Caco-2 (cell line): ENCODE measurements at regions of chr1 and their contacts with region 1.

Region 1: GRCh38 chr1:41432481-41433280 is 51.8 kb downstream of the EDN2 start:
- DNase-seq: peak; percentile 72 to 84
- H3K4me3 ChIP-seq: no peak overlapping the region
- H3K4me3 Mint-ChIP-seq: no peak overlapping the region
- H3K27ac Mint-ChIP-seq: peak overlapping the region; percentile 40
- H3K4me1 ChIP-seq: peaks cover 24% of the 10 kb centered on the region
- H3K4me1 Mint-ChIP-seq: peaks cover 7% of the 10 kb centered on the region
- H3K27me3 ChIP-seq: no peaks in the 10 kb centered on the region
- H3K27me3 Mint-ChIP-seq: no peaks in the 10 kb centered on the region
- CTCF ChIP-seq: peak; percentile 76 to 85

Region 2: GRCh38 chr1:41268154-41268770 is 164.4 kb before region 1 on chr1:
- CTCF ChIA-PET with region 1: no interaction called
- POLR2A ChIA-PET with region 1: no interaction called
- intact Hi-C with region 1: loop called (anchors 1 kb)
- DNase-seq: peak; percentile 56 to 77
- H3K4me3 ChIP-seq: no peak overlapping the region
- H3K4me3 Mint-ChIP-seq: no peak overlapping the region
- H3K27ac Mint-ChIP-seq: no peak overlapping the region
- H3K4me1 ChIP-seq: no peaks in the 10 kb centered on the region
- H3K4me1 Mint-ChIP-seq: no peaks in the 10 kb centered on the region
- H3K27me3 ChIP-seq: no peaks in the 10 kb centered on the region
- H3K27me3 Mint-ChIP-seq: no peaks in the 10 kb centered on the region
- CTCF ChIP-seq: peak; percentile 85 to 86

Region 3: GRCh38 chr1:41282679-41283317 is 149.9 kb before region 1 on chr1:
- CTCF ChIA-PET with region 1: interaction called, 6 read pairs
- POLR2A ChIA-PET with region 1: no interaction called
- intact Hi-C with region 1: loop called (anchors 5 kb)
- DNase-seq: peak; percentile 41 to 53
- H3K4me3 ChIP-seq: no peak overlapping the region
- H3K4me3 Mint-ChIP-seq: no peak overlapping the region
- H3K27ac Mint-ChIP-seq: no peak overlapping the region
- H3K4me1 ChIP-seq: no peaks in the 10 kb centered on the region
- H3K4me1 Mint-ChIP-seq: no peaks in the 10 kb centered on the region
- H3K27me3 ChIP-seq: no peaks in the 10 kb centered on the region
- H3K27me3 Mint-ChIP-seq: peaks cover 15% of the 10 kb centered on the region
- CTCF ChIP-seq: peak; percentile 76 to 78

Region 4: GRCh38 chr1:41322835-41323627 is 109.7 kb before region 1 on chr1:
- CTCF ChIA-PET with region 1: interaction called, 3 read pairs
- POLR2A ChIA-PET with region 1: no interaction called
- intact Hi-C with region 1: loop called (anchors 1 kb)
- DNase-seq: peak in 1 of 2 experiments; percentile 40
- H3K4me3 ChIP-seq: no peak overlapping the region
- H3K4me3 Mint-ChIP-seq: no peak overlapping the region
- H3K27ac Mint-ChIP-seq: no peak overlapping the region
- H3K4me1 ChIP-seq: no peaks in the 10 kb centered on the region
- H3K4me1 Mint-ChIP-seq: peaks cover 8% of the 10 kb centered on the region
- H3K27me3 ChIP-seq: no peaks in the 10 kb centered on the region
- H3K27me3 Mint-ChIP-seq: no peaks in the 10 kb centered on the region
- CTCF ChIP-seq: peak; percentile 27 to 48

Region 5: GRCh38 chr1:41496080-41497055 is 63.7 kb after region 1 on chr1:
- CTCF ChIA-PET with region 1: no interaction called
- POLR2A ChIA-PET with region 1: no interaction called
- intact Hi-C with region 1: no loop called
- DNase-seq: peak; percentile 88 to 89
- H3K4me3 ChIP-seq: peak overlapping the region; percentile 35
- H3K4me3 Mint-ChIP-seq: peak overlapping the region; percentile 42
- H3K27ac Mint-ChIP-seq: peak overlapping the region; percentile 55
- H3K4me1 ChIP-seq: peaks cover 45% of the 10 kb centered on the region
- H3K4me1 Mint-ChIP-seq: no peaks in the 10 kb centered on the region
- H3K27me3 ChIP-seq: no peaks in the 10 kb centered on the region
- H3K27me3 Mint-ChIP-seq: no peaks in the 10 kb centered on the region
- CTCF ChIP-seq: no peak

Region 6: GRCh38 chr1:41573785-41574713 is 141.4 kb after region 1 on chr1:
- CTCF ChIA-PET with region 1: no interaction called
- POLR2A ChIA-PET with region 1: no interaction called
- intact Hi-C with region 1: no loop called
- DNase-seq: peak; percentile 68 to 69
- H3K4me3 ChIP-seq: no peak overlapping the region
- H3K4me3 Mint-ChIP-seq: no peak overlapping the region
- H3K27ac Mint-ChIP-seq: no peak overlapping the region
- H3K4me1 ChIP-seq: no peaks in the 10 kb centered on the region
- H3K4me1 Mint-ChIP-seq: no peaks in the 10 kb centered on the region
- H3K27me3 ChIP-seq: no peaks in the 10 kb centered on the region
- H3K27me3 Mint-ChIP-seq: peaks cover 13% of the 10 kb centered on the region
- CTCF ChIP-seq: peak; percentile 52 to 75